CD4-positive, alpha-beta memory T cell (primary cell): ENCODE measurements at regions of chr2 and their contacts with region 1.

Region 1: GRCh38 chr2:26959331-26959730 is 11.1 kb upstream of the MAPRE3 start:
- DNase-seq: no peak
- H3K4me3 ChIP-seq: no peak overlapping the region
- H3K4me3 Mint-ChIP-seq: no peak overlapping the region
- H3K27ac ChIP-seq: no peak overlapping the region
- H3K27ac Mint-ChIP-seq: no peak overlapping the region
- H3K4me1 ChIP-seq: no peaks in the 10 kb centered on the region
- H3K4me1 Mint-ChIP-seq: peaks cover 0 to 4% (median 0%) of the 10 kb centered on the region in 4 donors
- H3K27me3 ChIP-seq: peaks cover 5% of the 10 kb centered on the region
- H3K27me3 Mint-ChIP-seq: peaks cover 19 to 21% of the 10 kb centered on the region in 2 donors

Region 2: DNA sequence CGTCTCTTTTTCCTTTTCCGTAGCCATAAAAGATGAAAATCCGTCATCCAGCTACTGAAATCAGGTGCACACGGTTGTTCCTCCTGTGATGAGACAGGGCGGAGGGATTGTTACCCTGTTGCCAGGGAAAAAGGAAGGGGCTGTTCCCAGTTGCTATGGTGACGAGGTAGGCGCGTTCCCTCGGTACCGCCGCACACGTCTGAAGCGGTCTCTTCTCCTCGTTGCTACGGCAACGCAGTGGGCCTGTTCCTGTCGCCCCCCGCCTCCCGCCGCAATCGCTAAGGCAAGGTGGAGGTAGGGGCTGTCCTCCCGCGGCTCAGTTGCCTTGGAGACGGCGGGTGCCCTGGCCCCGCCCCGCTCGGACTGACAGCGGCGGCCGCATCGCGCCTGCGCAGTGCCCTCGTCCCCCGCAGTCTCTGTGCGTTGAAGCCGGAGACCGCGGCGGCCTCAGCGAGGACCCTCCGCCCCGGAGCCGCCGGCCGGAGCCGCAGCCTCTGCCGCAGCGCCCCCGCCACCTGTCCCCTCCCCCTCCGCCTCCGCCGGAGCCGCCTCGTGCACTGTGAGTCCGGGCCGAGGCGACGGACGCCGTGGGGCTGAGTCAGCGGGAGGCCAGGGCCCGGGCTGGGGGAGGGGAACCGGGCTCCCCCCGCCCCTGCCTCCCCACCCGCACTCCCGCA is 11.1 kb after region 1 on chr2 and contains the start of gene MAPRE3:
- CTCF ChIA-PET with region 1: interaction called, 12 read pairs
- POLR2A ChIA-PET with region 1: no interaction called
- intact Hi-C with region 1: no loop called
- DNase-seq: peak; percentile 81 to 93 (median 85)
- H3K4me3 ChIP-seq: peak within 1 kb of the TSS; percentile 66 to 76
- H3K4me3 Mint-ChIP-seq: peak within 1 kb of the TSS; percentile 82 to 90 (median 85)
- H3K27ac ChIP-seq: peak within 1 kb of the TSS; percentile 44
- H3K27ac Mint-ChIP-seq: peak within 1 kb of the TSS; percentile 75 to 96 (median 92)
- H3K4me1 ChIP-seq: peaks cover 15% of the 10 kb centered on the region
- H3K4me1 Mint-ChIP-seq: peaks cover 12 to 30% (median 18%) of the 10 kb centered on the region in 4 donors
- H3K27me3 ChIP-seq: no peaks in the 10 kb centered on the region
- H3K27me3 Mint-ChIP-seq: peaks cover 5 to 11% of the 10 kb centered on the region in 2 donors
- total RNA-seq, gene MAPRE3: 3.4 to 3.6 TPM

Region 3: GRCh38 chr2:27016801-27017325 is 57.5 kb after region 1 on chr2:
- CTCF ChIA-PET with region 1: interaction called, 68 read pairs
- POLR2A ChIA-PET with region 1: interaction called, 3 read pairs
- intact Hi-C with region 1: no loop called
- DNase-seq: peak; percentile 18 to 49 (median 27)
- H3K4me3 ChIP-seq: no peak overlapping the region
- H3K4me3 Mint-ChIP-seq: no peak overlapping the region
- H3K27ac ChIP-seq: no peak overlapping the region
- H3K27ac Mint-ChIP-seq: no peak overlapping the region
- H3K4me1 ChIP-seq: no peaks in the 10 kb centered on the region
- H3K4me1 Mint-ChIP-seq: no peaks in the 10 kb centered on the region
- H3K27me3 ChIP-seq: no peaks in the 10 kb centered on the region
- H3K27me3 Mint-ChIP-seq: peaks cover 0 to 2% of the 10 kb centered on the region in 2 donors

Region 4: DNA sequence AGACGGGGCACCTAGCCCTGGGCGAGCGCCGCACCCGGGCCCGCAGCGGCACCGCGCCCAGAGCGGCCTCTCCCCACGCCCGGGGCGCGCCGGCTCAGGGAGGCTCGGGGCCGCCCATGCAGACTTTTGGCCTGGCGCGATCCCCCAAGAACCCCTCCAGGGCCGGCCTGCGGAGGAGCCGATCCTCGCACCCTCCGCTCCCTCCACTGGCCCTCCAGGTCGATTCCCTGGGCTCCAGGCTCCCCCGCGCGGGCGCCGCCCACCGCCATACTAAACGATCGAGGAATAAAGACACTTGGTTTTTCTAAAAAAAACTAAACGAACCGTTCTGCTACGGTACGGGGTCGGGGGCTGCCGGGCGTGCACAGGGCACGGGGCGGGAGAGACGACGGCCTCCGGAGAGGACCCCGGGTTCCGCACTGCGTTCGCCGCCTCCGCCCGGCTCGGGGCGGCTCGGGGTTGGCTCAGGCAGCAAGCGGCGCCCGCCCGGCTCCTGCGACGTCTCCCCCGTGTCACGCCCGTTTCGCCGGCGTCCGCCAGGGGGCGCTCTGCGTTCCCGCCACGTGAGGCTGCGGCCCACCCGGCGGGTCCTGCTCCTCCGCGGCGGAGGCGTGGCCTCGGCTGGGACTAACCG is 126.9 kb after region 1 on chr2:
- CTCF ChIA-PET with region 1: interaction called, 11 read pairs
- POLR2A ChIA-PET with region 1: interaction called, 3 read pairs
- intact Hi-C with region 1: loop called (anchors 1 kb)
- DNase-seq: peak; percentile 93 to 99 (median 98)
- H3K4me3 ChIP-seq: peak overlapping the region; percentile 11 to 75
- H3K4me3 Mint-ChIP-seq: peak overlapping the region; percentile 82 to 90 (median 86)
- H3K27ac ChIP-seq: peak overlapping the region; percentile 80
- H3K27ac Mint-ChIP-seq: peak overlapping the region; percentile 82 to 94 (median 89)
- H3K4me1 ChIP-seq: peaks cover 32% of the 10 kb centered on the region
- H3K4me1 Mint-ChIP-seq: peaks cover 9 to 37% (median 23%) of the 10 kb centered on the region in 4 donors
- H3K27me3 ChIP-seq: no peaks in the 10 kb centered on the region
- H3K27me3 Mint-ChIP-seq: no peaks in the 10 kb centered on the region

Region 5: GRCh38 chr2:27095745-27096651 is 136.7 kb after region 1 on chr2:
- CTCF ChIA-PET with region 1: interaction called, 8 read pairs
- POLR2A ChIA-PET with region 1: no interaction called
- intact Hi-C with region 1: loop called (anchors 1 kb)
- DNase-seq: peak in 3 of 5 donors; percentile 34 to 39 (median 37)
- H3K4me3 ChIP-seq: no peak overlapping the region
- H3K4me3 Mint-ChIP-seq: peak overlapping the region in 7 of 8 donors; percentile 5 to 81 (median 61)
- H3K27ac ChIP-seq: no peak overlapping the region
- H3K27ac Mint-ChIP-seq: peak overlapping the region in 4 of 7 donors; percentile 35 to 84 (median 53)
- H3K4me1 ChIP-seq: peaks cover 9% of the 10 kb centered on the region
- H3K4me1 Mint-ChIP-seq: peaks cover 8 to 16% (median 10%) of the 10 kb centered on the region in 4 donors
- H3K27me3 ChIP-seq: no peaks in the 10 kb centered on the region
- H3K27me3 Mint-ChIP-seq: no peaks in the 10 kb centered on the region

Region 6: DNA sequence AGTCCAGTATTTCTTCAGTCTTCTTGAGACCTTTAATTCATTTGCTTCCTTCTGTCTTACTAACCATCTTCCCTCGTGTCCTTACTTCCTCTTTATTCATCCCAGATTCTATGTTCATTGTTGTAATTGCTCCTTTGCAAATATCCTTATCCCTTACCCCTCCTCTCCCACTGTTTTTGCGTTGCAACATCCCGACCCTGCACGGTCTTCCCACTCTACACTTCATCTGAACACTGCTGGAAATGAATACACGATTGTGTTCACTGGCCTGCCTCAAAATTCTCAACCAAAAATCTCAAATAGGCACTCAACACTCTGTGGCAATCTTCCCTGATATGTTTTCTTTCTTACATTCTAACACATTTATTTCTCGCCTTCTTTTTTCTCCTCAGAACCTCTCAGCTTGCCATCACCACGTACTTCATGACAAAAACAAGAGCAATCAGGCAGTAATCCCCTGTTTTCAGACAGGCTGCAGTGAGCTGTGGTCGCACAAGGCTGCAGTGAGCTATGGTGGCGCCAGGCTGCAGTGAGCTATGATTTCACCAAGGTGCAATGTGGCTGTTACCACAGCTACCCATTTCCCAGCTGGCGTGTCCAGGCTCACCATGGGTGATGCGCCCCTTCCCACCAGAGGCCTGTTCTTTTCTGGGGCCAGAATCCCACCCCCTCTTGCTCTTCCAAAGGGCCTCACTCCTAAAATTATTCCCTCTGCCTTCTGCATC is 215.1 kb after region 1 on chr2:
- CTCF ChIA-PET with region 1: interaction called, 9 read pairs
- POLR2A ChIA-PET with region 1: no interaction called
- intact Hi-C with region 1: loop called (anchors 1 kb)
- DNase-seq: no peak
- H3K4me3 ChIP-seq: no peak overlapping the region
- H3K4me3 Mint-ChIP-seq: no peak overlapping the region
- H3K27ac ChIP-seq: no peak overlapping the region
- H3K27ac Mint-ChIP-seq: no peak overlapping the region
- H3K4me1 ChIP-seq: no peaks in the 10 kb centered on the region
- H3K4me1 Mint-ChIP-seq: peaks cover 4 to 6% (median 6%) of the 10 kb centered on the region in 4 donors
- H3K27me3 ChIP-seq: no peaks in the 10 kb centered on the region
- H3K27me3 Mint-ChIP-seq: peaks cover 24 to 28% of the 10 kb centered on the region in 2 donors

Region 7: GRCh38 chr2:27191053-27191829 is 231.9 kb after region 1 on chr2:
- CTCF ChIA-PET with region 1: interaction called, 24 read pairs
- POLR2A ChIA-PET with region 1: no interaction called
- intact Hi-C with region 1: no loop called
- DNase-seq: peak; percentile 44 to 61 (median 55)
- H3K4me3 ChIP-seq: no peak overlapping the region
- H3K4me3 Mint-ChIP-seq: no peak overlapping the region
- H3K27ac ChIP-seq: no peak overlapping the region
- H3K27ac Mint-ChIP-seq: no peak overlapping the region
- H3K4me1 ChIP-seq: no peaks in the 10 kb centered on the region
- H3K4me1 Mint-ChIP-seq: no peaks in the 10 kb centered on the region
- H3K27me3 ChIP-seq: no peaks in the 10 kb centered on the region
- H3K27me3 Mint-ChIP-seq: peaks cover 3 to 12% of the 10 kb centered on the region in 2 donors

Region 8: DNA sequence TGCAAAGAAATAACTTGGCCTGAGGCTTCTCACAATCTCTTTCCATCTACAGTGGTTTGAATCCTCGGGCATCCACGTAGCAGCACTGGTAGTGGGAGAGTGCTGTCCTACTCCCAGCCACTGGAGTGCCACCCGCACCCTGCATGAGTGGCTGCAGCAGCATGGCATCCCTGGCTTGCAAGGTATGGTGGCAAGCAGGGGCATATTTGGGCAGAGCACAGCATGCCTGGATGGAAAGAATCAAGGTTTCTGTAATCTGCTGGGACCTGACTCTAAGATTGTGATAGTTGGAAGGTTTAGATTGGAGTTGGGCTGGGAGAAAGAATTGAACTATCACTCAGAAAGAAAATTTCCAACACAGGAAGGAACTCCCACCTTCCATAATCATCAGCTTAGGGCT is 261.8 kb after region 1 on chr2:
- CTCF ChIA-PET with region 1: no interaction called
- POLR2A ChIA-PET with region 1: no interaction called
- intact Hi-C with region 1: no loop called
- DNase-seq: no peak
- H3K4me3 ChIP-seq: no peak overlapping the region
- H3K4me3 Mint-ChIP-seq: peak overlapping the region in 1 of 8 donors; percentile 10
- H3K27ac ChIP-seq: no peak overlapping the region
- H3K27ac Mint-ChIP-seq: peak overlapping the region in 2 of 7 donors; percentile 32 to 74
- H3K4me1 ChIP-seq: peaks cover 18% of the 10 kb centered on the region
- H3K4me1 Mint-ChIP-seq: peaks cover 19 to 28% (median 24%) of the 10 kb centered on the region in 4 donors
- H3K27me3 ChIP-seq: no peaks in the 10 kb centered on the region
- H3K27me3 Mint-ChIP-seq: no peaks in the 10 kb centered on the region